ENCODE measurements at regions of chr1 and their contacts with region 1.

Region 1: DNA sequence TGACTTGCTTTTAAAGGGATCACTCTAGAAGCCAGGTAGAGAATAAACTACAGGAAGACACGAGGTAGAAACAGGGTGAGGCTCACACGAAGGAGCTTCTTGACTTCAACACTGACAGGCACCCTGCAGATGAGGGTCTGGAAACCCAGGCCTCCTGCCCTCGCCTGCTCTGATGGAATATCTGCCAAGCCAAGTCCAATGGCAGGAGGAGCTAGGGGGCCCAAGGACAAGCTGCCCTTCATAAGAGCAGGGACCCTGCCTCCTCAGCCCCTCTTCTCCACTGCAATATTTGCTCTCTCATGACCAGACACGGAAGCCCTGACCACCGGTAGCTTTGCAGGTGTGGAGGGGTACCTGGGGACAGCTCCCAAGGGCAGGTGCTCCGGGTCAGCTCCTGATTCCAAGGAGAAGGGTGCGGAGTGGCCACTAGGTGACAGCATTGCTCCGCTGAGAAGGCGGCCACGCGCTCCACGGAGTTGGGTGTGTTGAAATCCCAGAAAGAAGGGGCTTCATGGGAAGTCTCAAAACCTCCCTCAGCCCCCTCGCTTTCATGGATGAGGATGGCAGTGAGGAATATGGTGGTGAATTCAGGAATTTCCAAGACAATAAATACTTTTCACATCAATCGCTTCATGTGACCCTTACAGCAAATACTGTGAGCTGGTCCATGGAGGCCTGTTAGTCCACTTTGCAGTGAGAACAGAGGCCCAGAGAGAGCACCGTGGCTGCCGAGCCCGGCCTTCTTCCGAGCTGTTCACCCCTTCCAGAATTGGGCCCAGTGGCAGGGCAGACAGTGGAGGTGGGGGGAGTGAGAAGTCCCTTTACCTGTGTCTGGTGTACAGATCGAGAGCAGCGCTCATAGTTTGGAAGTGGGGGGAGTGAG is 33.2 kb upstream of the PAX7 start:
- DNase-seq: peak; percentile 71
- ATAC-seq: peak; percentile 84

Region 2: GRCh38 chr1:18429654-18430053 is 167.7 kb before region 1 on chr1:
- intact Hi-C with region 1: no loop called
- DNase-seq: no peak
- ATAC-seq: no peak

Region 3: DNA sequence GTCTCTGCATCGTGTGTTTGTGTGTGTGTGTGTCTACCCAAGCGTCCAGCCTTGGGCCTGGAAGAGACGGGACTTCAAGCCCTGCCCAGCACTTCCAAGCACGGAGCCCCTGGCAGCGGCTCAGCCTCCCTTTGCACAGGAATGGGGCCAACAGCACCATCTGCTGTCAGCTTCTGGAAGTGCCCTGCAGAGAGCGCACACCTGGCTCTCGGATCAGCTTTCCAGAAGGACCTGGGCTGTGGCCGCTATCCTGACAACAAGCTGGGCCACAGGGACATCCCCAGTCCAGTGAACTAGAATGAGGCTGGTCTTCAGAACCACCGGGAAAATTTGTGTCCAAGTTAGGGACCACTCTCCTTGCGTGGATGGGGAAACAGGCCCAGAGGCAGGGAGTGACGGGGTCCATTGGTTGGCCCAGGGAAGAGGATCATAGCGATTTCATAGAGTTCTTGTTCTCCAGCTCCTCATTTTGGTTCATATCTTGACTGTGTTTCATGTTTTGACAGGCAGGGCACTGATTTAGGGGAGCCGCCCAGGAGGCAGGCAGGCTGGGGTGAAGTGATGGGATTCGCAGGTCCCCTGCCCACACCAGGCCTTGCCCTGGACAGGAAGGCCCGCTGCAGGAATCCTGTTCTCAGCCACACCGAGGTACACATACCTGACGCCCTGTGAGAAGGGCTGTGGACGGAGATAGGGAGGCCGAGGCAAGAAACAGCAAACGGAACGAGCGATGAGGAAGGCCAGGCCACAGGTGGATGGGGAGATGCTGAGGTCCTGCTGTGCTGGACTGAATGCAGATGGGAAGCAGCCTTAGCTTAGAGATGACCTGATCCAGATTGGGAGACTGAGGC is 223.6 kb after region 1 on chr1:
- intact Hi-C with region 1: loop called (anchors 10 kb)
- DNase-seq: peak; percentile 88
- ATAC-seq: peak; percentile 92